ENCODE measurements at regions of chr10 and their contacts with region 1.

Region 1: GRCh38 chr10:71963756-71964668 is at the start of gene CHST3:
- DNase-seq: peak; percentile 88 to 91 (median 89)
- ATAC-seq: peak; percentile 68 to 87 (median 82)
- H3K4me3 ChIP-seq: peak within 1 kb of the TSS; percentile 62 to 97 (median 78)
- H3K27ac ChIP-seq: peak within 1 kb of the TSS; percentile 91 to 99 (median 98)
- H3K4me1 ChIP-seq: peaks cover 8 to 50% (median 36%) of the 10 kb centered on the region in 12 donors
- H3K27me3 ChIP-seq: peaks cover 0 to 23% (median 0%) of the 10 kb centered on the region in 9 donors
- CTCF ChIP-seq: peak in 2 of 12 donors; percentile 6 to 13
- POLR2A ChIP-seq: peak in 1 of 2 donors; percentile 59
- total RNA-seq, gene CHST3: 12.0 to 51.3 (median 25.0) TPM

Region 2: GRCh38 chr10:70418229-70418628 is 1545.8 kb before region 1 on chr10:
- intact Hi-C with region 1: no loop called
- DNase-seq: no peak
- ATAC-seq: no peak
- H3K4me3 ChIP-seq: no peak overlapping the region
- H3K27ac ChIP-seq: no peak overlapping the region
- H3K4me1 ChIP-seq: peaks cover 0 to 27% (median 4%) of the 10 kb centered on the region in 12 donors
- H3K27me3 ChIP-seq: no peaks in the 10 kb centered on the region
- CTCF ChIP-seq: no peak
- POLR2A ChIP-seq: no peak

Region 3: DNA sequence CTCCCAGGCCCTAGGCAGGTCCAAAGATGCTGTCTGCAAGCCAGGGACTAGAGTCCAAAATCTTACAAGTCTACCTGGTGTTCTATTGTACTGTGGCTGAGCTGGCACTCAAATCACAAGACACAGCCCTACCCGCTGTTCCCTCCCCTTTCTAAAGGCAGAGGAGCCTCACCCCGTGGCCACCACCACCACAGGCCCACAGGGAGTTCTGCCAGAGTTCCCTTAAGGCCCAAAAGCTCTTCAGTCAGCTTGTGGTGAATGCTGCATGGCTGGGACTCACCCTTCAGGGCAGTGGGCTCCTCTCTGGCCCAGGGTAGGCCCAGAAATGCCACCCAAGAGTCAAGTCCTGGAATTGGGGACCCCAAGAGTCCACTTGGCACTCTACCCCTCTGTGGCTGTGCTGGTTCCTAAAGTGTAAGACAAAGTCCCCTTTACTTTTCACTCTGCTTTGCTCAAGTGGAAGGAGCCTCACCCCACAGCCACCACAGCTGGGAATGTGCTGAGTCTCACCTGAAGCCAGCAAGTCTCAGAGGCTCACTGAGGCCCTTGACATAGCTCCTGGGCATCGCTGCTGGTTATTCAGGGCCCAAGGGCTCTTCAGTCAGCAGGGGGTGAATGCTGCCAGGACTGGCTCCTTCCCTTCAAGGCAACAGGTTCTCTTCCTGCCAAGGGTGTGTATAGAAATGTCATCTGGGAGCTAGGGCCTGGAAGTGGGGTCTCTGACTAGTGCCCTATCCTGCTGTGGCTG is 64.2 kb before region 1 on chr10:
- intact Hi-C with region 1: loop called in 1 of 10 experiments (anchors 1 kb)
- DNase-seq: peak in 1 of 5 donors; percentile 9
- ATAC-seq: no peak
- H3K4me3 ChIP-seq: no peak overlapping the region
- H3K27ac ChIP-seq: no peak overlapping the region
- H3K4me1 ChIP-seq: peaks cover 0 to 16% (median 0%) of the 10 kb centered on the region in 12 donors
- H3K27me3 ChIP-seq: no peaks in the 10 kb centered on the region
- CTCF ChIP-seq: no peak
- POLR2A ChIP-seq: no peak

Region 4: GRCh38 chr10:71985542-71986250 is 21.7 kb after region 1 on chr10:
- intact Hi-C with region 1: loop called in 1 of 10 experiments (anchors 1 kb)
- DNase-seq: peak in 4 of 5 donors; percentile 57 to 80 (median 70)
- ATAC-seq: peak; percentile 55 to 81 (median 72)
- H3K4me3 ChIP-seq: no peak overlapping the region
- H3K27ac ChIP-seq: peak overlapping the region; percentile 55 to 87 (median 78)
- H3K4me1 ChIP-seq: peaks cover 33 to 90% (median 76%) of the 10 kb centered on the region in 12 donors
- H3K27me3 ChIP-seq: no peaks in the 10 kb centered on the region
- CTCF ChIP-seq: peak in 4 of 12 donors; percentile 10 to 26 (median 19)
- POLR2A ChIP-seq: no peak

Region 5: DNA sequence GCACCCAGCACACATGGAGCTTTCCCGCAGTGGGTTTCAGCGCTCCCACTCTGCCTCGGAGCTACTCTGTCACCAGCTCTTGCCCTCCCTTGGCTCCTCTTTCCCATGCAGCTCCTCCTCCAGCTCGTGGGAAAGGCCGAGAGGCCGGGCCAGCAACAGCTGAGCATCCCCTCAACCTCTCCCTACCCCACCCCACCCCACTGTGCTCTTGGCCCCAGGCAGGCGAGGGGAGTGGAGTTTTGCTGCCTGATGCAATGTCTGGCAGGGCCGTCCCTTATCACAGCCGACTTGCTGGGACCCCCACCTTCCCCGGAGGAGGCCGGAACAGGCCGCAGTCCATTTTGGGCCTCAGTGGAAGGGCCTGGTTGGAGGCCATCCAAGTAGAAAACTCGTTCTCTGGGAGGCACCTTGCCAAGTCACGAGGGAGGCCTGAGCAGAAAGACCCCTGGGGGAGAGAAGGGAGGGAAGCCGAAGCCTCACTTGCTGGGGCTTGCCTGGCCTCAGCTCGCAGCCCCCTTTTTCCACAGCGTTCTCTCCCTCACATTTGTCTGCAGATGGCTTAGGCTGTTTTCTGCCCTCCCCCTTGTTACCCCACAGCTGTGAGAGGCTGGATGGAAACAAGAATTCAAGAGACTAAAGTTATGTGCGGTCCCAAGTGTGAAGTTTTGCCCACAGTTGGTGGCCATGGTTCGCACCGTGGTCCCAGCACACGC is 35.5 kb after region 1 on chr10:
- intact Hi-C with region 1: loop called in 1 of 10 experiments (anchors 5 kb)
- DNase-seq: peak; percentile 86 to 93 (median 89)
- ATAC-seq: peak; percentile 63 to 80 (median 76)
- H3K4me3 ChIP-seq: peak overlapping the region in 3 of 12 donors; percentile 5 to 9 (median 8)
- H3K27ac ChIP-seq: peak overlapping the region; percentile 63 to 89 (median 82)
- H3K4me1 ChIP-seq: peaks cover 16 to 77% (median 59%) of the 10 kb centered on the region in 12 donors
- H3K27me3 ChIP-seq: no peaks in the 10 kb centered on the region
- CTCF ChIP-seq: no peak
- POLR2A ChIP-seq: no peak

Region 6: GRCh38 chr10:72009411-72010081 is 45.5 kb after region 1 on chr10:
- intact Hi-C with region 1: loop called in 3 of 10 experiments (anchors 5 kb)
- DNase-seq: peak; percentile 85 to 93 (median 87)
- ATAC-seq: peak; percentile 62 to 88 (median 76)
- H3K4me3 ChIP-seq: no peak overlapping the region
- H3K27ac ChIP-seq: peak overlapping the region; percentile 71 to 97 (median 87)
- H3K4me1 ChIP-seq: peaks cover 7 to 74% (median 51%) of the 10 kb centered on the region in 12 donors
- H3K27me3 ChIP-seq: no peaks in the 10 kb centered on the region
- CTCF ChIP-seq: no peak
- POLR2A ChIP-seq: peak in 1 of 2 donors; percentile 19

Region 7: DNA sequence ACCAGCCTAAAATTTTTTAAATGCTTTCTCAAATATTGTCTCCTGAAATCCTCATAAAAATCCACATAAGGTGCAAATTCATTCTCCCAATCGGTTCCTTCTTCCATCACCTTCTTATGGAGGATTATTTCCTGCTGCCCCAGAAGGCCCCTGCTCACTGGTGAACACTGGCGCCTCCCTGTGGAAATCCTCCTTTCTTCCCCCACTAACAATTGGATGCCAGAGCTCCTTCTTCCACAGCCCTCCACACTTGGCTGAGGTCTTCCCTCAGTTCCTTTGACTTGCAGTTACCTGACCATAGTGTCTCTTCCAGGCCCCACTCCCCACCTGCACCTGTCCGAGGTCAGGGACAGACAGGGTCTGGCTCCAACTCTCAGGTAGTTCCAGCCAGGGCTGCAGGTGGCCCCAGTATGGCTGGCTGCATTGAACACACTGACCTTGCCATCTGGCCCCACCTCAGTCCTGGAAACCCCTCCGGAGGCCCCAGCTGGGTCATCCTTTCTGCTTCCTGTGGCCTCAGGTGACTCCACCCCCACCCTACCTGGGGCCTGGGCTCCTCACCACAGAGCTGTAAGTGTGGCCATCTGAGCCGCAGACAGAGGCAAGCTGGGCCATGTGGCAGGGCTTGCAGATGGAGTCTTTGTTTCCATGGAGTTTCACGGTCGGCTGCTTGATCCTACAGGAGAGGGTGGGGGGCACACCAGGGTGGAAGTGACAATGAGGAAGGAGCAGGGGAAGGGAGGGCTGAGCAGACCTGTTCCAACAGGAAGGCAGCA is 105.9 kb after region 1 on chr10:
- intact Hi-C with region 1: no loop called
- DNase-seq: peak in 1 of 5 donors; percentile 24
- ATAC-seq: no peak
- H3K4me3 ChIP-seq: no peak overlapping the region
- H3K27ac ChIP-seq: no peak overlapping the region
- H3K4me1 ChIP-seq: peaks cover 0 to 48% (median 13%) of the 10 kb centered on the region in 12 donors
- H3K27me3 ChIP-seq: no peaks in the 10 kb centered on the region
- CTCF ChIP-seq: no peak
- POLR2A ChIP-seq: no peak

Region 8: DNA sequence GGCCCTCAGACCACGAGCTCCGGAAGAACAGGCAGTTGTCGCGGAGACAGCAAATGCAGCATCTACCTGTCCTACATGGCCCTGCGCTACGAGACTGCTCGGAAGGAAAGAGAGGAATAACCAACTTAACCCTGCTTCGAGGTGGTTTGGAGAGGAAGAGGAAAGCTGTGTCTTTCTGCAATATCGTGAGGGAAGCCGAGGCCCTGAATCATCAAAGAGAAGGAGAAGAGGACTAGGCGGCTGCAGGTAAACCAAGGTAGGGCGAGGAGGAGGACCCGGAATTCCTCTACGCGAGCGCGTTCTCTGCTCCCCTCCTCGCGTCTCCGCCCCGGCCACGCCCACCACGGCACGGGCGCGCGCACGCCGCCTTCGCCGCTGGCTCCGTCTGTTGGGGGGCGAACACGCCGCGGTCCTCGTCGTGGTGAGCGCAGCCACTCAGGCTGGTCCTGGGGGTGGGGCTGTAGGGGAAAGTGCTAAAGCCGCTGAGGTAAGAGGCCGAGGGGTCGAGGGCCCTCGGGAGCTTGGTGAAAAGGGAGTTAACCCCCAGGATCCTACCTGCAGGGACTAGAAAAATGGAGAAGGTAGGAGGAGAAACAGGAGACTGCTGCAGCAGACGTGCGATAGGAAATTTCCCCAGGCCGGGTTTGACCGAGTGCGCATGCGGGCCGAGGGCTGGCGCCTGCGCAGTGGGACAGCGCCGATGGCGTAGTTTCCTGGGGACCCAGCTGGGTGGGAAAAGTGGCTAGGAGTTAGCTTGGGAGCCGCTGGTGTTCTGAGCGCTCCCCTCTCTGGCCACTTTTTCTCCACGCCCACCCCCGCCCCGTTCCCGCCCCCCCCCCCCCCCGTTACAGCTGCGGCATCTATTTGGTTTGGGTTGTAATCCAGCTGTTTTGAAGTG is 251.9 kb after region 1 on chr10 and contains the starts of genes ANAPC16 and ASCC1:
- intact Hi-C with region 1: loop called in 5 of 10 experiments (anchors 2 to 10 kb)
- DNase-seq: peak; percentile 91 to 96 (median 93)
- ATAC-seq: peak; percentile 92 to 99 (median 98)
- H3K4me3 ChIP-seq: peak within 1 kb of the TSS; percentile 62 to 91 (median 72)
- H3K27ac ChIP-seq: peak within 1 kb of the TSS; percentile 91 to 100 (median 98)
- H3K4me1 ChIP-seq: peaks cover 9 to 54% (median 38%) of the 10 kb centered on the region in 12 donors
- H3K27me3 ChIP-seq: no peaks in the 10 kb centered on the region
- CTCF ChIP-seq: peak in 1 of 12 donors; percentile 5
- POLR2A ChIP-seq: peak; percentile 41 to 92
- total RNA-seq, gene ANAPC16: 135 to 237 (median 179) TPM
- total RNA-seq, gene ASCC1: 26.4 to 44.8 (median 35.3) TPM

Measured in heart left ventricle (tissue), 16 donors.